Posterior vena cava (tissue), 2 donors: ENCODE measurements at regions of chr1 and their contacts with region 1.

Region 1: GRCh38 chr1:184483101-184483683 is 96.4 kb downstream of the C1orf21 start:
- DNase-seq: no peak

Region 2: DNA sequence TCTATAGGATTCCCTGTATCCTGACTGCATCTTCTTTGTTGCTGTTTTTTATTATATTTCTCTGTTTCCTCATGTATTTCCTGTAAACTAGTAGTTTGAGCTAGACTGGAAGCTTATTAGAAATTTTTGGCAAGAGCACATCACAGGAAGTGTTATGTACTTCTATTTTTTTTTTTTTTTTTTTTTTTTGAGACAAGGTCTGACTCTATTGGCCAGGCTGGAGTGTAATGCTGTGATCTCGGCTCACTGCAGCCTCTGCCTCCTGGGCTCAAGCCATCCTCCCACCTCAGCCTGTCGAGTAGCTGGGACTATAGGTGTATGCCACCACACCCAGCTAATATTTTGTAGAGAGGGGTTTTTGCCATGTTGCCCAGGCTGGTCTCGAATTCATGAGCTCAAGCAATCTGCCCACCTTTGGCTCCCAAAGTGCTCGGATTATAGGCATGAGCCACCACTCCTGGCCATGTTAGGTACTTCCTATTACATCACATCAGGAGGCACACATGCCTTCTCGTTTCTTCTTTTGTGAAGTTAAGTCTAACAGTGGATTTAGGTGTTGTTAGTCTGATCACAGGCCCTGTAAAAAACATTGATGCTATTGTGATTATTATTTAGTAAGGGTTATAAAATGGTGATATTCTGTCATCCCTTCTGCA is 83.9 kb before region 1 on chr1:
- intact Hi-C with region 1: loop called in 1 of 2 experiments (anchors 10 kb)
- DNase-seq: no peak